ENCODE measurements at regions of chr9 and their contacts with region 1.

Region 1: GRCh38 chr9:123322273-123323195 is 33.5 kb upstream of the CRB2 start:
- DNase-seq: peak; percentile 84
- ATAC-seq: peak; percentile 88
- H3K4me3 Mint-ChIP-seq: peak overlapping the region; percentile 47
- H3K27ac Mint-ChIP-seq: peak overlapping the region; percentile 98
- H3K4me1 Mint-ChIP-seq: peaks cover 63% of the 10 kb centered on the region
- H3K27me3 Mint-ChIP-seq: no peaks in the 10 kb centered on the region

Region 2: DNA sequence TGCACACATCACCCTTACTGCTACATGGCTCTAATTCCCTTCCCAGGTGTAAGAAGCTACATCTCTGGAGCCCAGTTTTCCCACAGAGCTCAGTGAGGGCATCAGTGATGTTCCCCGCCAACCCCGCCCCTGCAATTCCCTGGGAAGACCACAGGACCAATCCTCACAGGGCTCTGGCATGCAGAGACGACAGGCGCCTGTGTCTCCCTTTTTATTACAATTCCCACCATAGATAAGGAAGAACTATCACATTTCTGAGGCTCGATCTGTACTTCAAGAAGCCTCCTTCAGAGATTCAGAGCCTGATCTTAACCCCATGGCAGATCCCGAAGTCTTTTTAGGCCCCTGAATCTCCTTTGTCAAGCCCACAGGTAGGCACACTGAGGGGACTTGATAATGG is 580.5 kb before region 1 on chr9 and contains the start of gene OR1L6:
- CTCF ChIA-PET with region 1: no interaction called
- POLR2A ChIA-PET with region 1: no interaction called
- DNase-seq: no peak
- ATAC-seq: no peak
- H3K4me3 Mint-ChIP-seq: no peak within 1 kb of the TSS
- H3K27ac Mint-ChIP-seq: no peak within 1 kb of the TSS
- H3K4me1 Mint-ChIP-seq: no peaks in the 10 kb centered on the region
- H3K27me3 Mint-ChIP-seq: peaks cover 3% of the 10 kb centered on the region
- total RNA-seq, gene OR1L6: not detected

Region 3: GRCh38 chr9:123312306-123312877 is 10.1 kb before region 1 on chr9:
- CTCF ChIA-PET with region 1: no interaction called
- POLR2A ChIA-PET with region 1: interaction called, 12 read pairs
- DNase-seq: no peak
- ATAC-seq: no peak
- H3K4me3 Mint-ChIP-seq: no peak overlapping the region
- H3K27ac Mint-ChIP-seq: no peak overlapping the region
- H3K4me1 Mint-ChIP-seq: peaks cover 5% of the 10 kb centered on the region
- H3K27me3 Mint-ChIP-seq: peaks cover 10% of the 10 kb centered on the region

Region 4: DNA sequence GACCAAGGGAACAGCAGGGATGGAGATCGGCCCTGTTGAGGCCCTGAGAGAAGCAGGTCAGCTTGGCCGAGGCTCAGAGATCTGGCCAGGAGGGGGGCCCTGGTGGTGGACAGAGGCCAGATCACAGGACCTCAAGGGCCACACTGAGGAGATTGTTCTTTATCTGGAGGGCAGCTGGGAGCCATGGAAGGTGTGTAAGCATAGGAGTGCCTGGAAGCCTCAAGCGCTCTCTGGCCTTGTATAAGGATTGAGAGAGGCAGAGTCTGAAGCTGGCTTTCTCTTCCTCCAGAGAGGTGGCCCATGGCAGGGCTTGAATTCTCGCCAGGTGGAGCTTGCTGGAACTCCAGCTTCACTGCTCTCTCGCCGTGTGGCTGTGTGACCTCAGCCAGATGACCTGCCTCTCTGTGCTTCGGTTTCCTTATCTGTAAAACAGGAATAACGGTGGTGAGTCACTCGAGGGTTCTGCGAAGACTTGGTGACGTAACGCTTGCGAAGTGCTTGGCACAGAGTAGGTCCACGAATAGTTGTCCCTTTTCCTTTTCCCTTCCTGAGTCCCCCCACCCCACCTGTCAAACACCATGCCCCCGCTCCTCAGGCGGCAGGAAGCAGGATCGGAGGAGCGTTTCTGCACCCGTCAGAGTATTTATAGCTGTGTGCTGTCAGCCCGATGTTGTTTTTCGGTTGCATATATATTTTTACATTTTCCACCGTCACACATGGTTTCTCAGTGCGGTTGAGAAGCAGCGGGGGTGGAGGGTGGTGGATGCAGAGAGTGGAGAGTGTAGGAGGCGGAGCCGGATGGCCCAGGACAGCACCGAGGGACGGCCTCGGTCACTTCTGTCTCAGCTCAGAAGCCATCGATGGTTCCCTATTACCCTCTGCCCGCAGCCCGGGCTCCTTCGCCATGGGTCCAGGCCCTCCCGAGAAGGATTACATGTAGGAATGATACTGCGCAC is 16.5 kb after region 1 on chr9:
- CTCF ChIA-PET with region 1: interaction called, 14 read pairs
- POLR2A ChIA-PET with region 1: interaction called, 43 read pairs
- DNase-seq: peak; percentile 79
- ATAC-seq: peak; percentile 83
- H3K4me3 Mint-ChIP-seq: peak overlapping the region; percentile 75
- H3K27ac Mint-ChIP-seq: peak overlapping the region; percentile 97
- H3K4me1 Mint-ChIP-seq: peaks cover 46% of the 10 kb centered on the region
- H3K27me3 Mint-ChIP-seq: no peaks in the 10 kb centered on the region

Region 5: GRCh38 chr9:123414946-123415821 is 92.7 kb after region 1 on chr9:
- CTCF ChIA-PET with region 1: no interaction called
- POLR2A ChIA-PET with region 1: no interaction called
- DNase-seq: no peak
- ATAC-seq: no peak
- H3K4me3 Mint-ChIP-seq: no peak overlapping the region
- H3K27ac Mint-ChIP-seq: no peak overlapping the region
- H3K4me1 Mint-ChIP-seq: no peaks in the 10 kb centered on the region
- H3K27me3 Mint-ChIP-seq: no peaks in the 10 kb centered on the region